Activated CD8-positive, alpha-beta T cell treated with anti-CD3 and anti-CD28 coated beads, Interleukin-2, amount 10 ng/mL, durations not matched to agents 7 days and 5 days (primary cell): ENCODE measurements at regions of chr7 and their contacts with region 1.

Region 1: DNA sequence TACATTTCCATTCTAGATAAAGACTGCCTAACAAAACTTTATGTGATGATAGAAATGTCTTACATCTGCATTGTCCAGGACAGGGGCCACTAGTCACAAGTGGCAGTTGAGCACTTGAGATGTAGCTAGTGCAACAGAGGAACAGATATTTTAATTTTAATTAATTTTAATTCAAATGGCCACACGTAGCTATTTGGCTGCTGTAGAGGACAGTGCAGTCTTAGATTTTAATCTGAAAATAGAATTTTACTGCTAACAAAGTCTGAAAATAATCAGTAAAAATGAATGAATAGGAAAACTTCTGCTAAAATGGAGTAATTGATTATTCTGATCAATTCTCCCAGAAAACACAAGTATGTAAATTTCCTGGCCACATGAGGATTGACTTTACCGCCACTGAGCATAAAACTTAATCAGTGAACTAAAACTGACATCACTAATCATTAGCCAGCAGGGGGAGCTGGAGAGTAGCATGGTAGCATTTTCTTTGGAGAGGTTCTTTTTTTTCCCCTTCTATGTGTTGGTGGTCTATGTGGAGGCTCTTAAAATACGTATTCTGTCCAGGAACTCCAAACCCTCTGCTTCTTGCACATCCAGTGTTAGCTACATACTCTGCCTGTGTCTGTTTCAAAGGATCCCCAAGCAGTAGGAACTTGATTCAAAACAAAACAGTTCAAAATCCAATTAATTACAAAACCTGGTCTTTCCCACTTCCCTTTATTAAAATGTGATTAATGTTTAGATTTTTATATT is 52.1 kb downstream of the TSPAN12 start:
- DNase-seq: peak; percentile 69
- ATAC-seq: peak; percentile 44
- H3K4me3 Mint-ChIP-seq: no peak overlapping the region
- H3K27ac Mint-ChIP-seq: no peak overlapping the region
- H3K4me1 Mint-ChIP-seq: no peaks in the 10 kb centered on the region
- H3K27me3 Mint-ChIP-seq: peaks cover 3% of the 10 kb centered on the region

Region 2: DNA sequence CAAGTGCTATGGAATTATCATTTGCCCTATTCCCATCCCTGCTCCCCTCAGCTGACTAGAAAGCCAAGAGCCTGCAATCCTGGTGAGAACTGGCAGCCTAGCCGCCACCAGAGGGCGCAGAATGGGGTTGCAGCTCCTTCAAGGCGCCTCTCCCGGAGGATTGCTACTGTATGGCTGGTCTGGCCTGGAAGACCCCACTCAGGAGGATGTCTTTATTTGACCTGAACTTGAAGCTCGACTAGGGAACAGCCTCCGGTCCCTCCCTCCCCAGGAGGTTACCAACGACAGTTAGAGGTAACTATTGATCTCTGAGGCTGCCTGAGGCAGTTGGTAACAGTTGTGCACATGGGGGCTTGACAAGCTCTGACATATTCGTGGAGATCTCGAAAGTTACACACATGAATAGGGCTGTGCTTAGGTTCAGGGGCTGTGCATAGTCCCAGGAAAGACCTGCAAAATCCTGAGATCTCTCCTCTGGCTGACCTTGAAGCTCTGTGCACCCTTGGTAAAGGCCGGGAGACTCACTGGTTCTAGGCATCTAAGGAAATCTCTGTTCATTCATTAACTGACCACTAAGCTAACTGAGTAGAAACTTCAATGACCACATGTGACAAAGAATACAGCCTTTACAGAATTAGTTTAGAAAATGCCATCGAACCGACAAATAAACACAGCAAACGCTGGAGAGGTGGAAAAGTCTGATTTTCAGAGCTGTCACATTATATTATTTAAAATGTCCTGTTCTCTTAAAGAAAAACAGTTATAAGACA is 13.5 kb before region 1 on chr7:
- CTCF ChIA-PET with region 1: interaction called, 24 read pairs
- POLR2A ChIA-PET with region 1: no interaction called
- DNase-seq: peak; percentile 65
- ATAC-seq: peak; percentile 87
- H3K4me3 Mint-ChIP-seq: no peak overlapping the region
- H3K27ac Mint-ChIP-seq: no peak overlapping the region
- H3K4me1 Mint-ChIP-seq: no peaks in the 10 kb centered on the region
- H3K27me3 Mint-ChIP-seq: peaks cover 13% of the 10 kb centered on the region

Region 3: GRCh38 chr7:120825576-120825975 is 19.8 kb after region 1 on chr7:
- CTCF ChIA-PET with region 1: no interaction called
- POLR2A ChIA-PET with region 1: no interaction called
- DNase-seq: no peak
- ATAC-seq: no peak
- H3K4me3 Mint-ChIP-seq: no peak overlapping the region
- H3K27ac Mint-ChIP-seq: no peak overlapping the region
- H3K4me1 Mint-ChIP-seq: no peaks in the 10 kb centered on the region
- H3K27me3 Mint-ChIP-seq: peaks cover 10% of the 10 kb centered on the region